ENCODE measurements at regions of chr1 and their contacts with region 1.

Region 1: DNA sequence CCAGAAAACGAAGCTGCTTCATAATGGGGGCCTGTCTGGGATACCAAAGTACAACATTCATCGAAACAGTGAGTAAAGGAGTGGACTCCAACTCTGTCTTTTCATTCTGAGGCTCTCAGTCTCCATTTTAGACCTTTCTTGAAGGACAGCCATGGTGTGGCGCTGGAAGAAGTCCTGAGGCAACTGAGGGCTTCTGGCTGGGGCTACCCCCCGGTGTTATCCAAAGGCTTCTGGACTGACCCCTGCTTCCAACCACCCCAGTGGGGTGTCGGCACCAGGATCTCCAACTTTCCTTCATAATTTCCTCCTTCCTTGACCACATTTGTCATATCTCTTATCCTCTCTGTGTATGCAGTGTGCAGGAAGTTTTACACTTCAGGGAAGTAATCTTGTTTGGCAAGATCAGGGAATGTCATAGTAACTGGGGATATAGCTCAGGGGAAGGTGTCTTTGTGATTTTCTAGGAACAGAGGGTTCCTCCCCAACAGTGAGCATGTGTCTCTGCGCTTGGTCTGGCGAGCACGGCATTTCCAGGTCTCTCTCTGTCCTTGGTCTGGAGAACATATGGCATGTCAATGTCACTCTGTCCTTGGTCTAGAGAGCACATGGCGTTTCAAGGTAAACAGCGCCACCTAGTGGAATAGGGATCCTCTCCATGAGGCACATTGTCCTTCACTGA is 19.4 kb upstream of the BSDC1 start:
- DNase-seq: no peak
- H3K4me3 ChIP-seq: no peak overlapping the region
- H3K27ac ChIP-seq: no peak overlapping the region
- H3K27me3 ChIP-seq: peaks cover 2% of the 10 kb centered on the region
- CTCF ChIP-seq: peak; percentile 83

Region 2: GRCh38 chr1:32470991-32471694 is 57.5 kb after region 1 on chr1:
- CTCF ChIA-PET with region 1: interaction called, 3 read pairs
- POLR2A ChIA-PET with region 1: interaction called, 10 read pairs
- DNase-seq: no peak
- H3K4me3 ChIP-seq: no peak overlapping the region
- H3K27ac ChIP-seq: no peak overlapping the region
- H3K27me3 ChIP-seq: peaks cover 37% of the 10 kb centered on the region
- CTCF ChIP-seq: no peak

Measured in AG04450 (cell line).